ENCODE measurements at regions of chr18 and their contacts with region 1.

Region 1: GRCh38 chr18:9055626-9056025 is 46.9 kb upstream of the NDUFV2 start:
- DNase-seq: no peak
- ATAC-seq: no peak
- H3K4me3 ChIP-seq: no peak overlapping the region
- H3K27ac ChIP-seq: no peak overlapping the region
- H3K4me1 ChIP-seq: peaks cover 6% of the 10 kb centered on the region; the same call in 1 of the 2 replicates
- H3K27me3 ChIP-seq: no peaks in the 10 kb centered on the region
- CTCF ChIP-seq: no peak

Region 2: GRCh38 chr18:8643326-8643878 is 412.2 kb before region 1 on chr18:
- CTCF ChIA-PET with region 1: no interaction called
- POLR2A ChIA-PET with region 1: interaction called, 13 read pairs
- in situ Hi-C with region 1: no loop called
- intact Hi-C with region 1: no loop called
- DNase-seq: no peak
- ATAC-seq: no peak
- H3K4me3 ChIP-seq: no peak overlapping the region
- H3K27ac ChIP-seq: no peak overlapping the region
- H3K4me1 ChIP-seq: no peaks in the 10 kb centered on the region
- H3K27me3 ChIP-seq: no peaks in the 10 kb centered on the region
- CTCF ChIP-seq: no peak

Region 3: DNA sequence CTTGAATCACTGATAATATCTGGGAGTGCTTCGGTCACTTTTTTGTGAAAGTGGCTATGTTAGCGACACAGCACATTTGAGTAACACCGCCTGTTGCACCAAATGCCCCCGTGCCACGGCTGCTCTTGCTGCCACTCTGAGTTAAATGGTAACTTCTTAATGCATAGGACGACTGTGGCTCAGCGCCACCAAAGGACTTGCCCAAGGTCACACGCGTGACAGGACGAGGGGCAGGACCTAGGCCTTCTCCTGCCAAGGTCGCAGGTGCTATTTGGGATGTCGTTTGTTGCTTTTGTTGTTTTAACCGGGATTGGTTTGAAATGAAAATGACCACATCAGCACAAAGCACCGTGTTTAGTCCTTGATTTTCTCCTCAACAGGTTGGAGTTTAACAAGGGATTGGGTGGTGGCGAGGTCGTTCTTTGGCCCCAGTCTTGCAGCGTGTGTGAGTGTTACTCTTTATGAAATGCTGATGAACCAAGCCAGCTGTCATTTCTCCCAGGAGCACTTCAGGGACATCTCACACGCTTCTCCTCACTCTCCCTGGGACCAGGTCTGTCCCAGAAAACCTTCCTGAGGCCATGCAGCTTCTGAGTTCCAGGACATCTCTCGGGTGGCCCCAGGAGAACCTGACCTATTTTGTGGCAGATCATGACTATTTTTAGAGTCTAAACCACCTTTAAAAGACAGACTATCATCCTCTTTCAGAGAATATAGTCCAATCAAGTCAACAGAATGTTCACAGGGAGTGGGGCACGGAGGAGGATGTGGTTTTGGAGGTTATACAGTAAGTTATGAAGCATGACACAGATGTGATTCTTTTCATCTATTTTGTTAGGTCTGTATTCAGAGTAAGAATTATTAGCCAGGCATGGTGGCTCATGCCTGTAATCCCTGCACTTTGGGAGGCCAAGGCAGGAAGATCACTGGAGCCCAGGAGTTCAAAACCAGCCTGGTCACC is 300.4 kb before region 1 on chr18:
- CTCF ChIA-PET with region 1: no interaction called
- POLR2A ChIA-PET with region 1: no interaction called
- in situ Hi-C with region 1: no loop called
- intact Hi-C with region 1: no loop called
- DNase-seq: no peak
- ATAC-seq: no peak
- H3K4me3 ChIP-seq: no peak overlapping the region
- H3K27ac ChIP-seq: no peak overlapping the region
- H3K4me1 ChIP-seq: no peaks in the 10 kb centered on the region
- H3K27me3 ChIP-seq: no peaks in the 10 kb centered on the region
- CTCF ChIP-seq: no peak

Measured in Panc1 (cell line).